CD8-positive, alpha-beta T cell (primary cell): ENCODE measurements at regions of chr3 and their contacts with region 1.

Region 1: GRCh38 chr3:18424729-18425640 is at the start of gene SATB1:
- DNase-seq: peak; percentile 46 to 83 (median 76)
- ATAC-seq: peak; percentile 42
- H3K4me3 ChIP-seq: peak within 1 kb of the TSS; percentile 82 to 84
- H3K4me3 Mint-ChIP-seq: peak within 1 kb of the TSS; percentile 91
- H3K27ac ChIP-seq: peak within 1 kb of the TSS; percentile 76 to 83
- H3K27ac Mint-ChIP-seq: peak within 1 kb of the TSS; percentile 95
- H3K4me1 ChIP-seq: peaks cover 55% of the 10 kb centered on the region
- H3K4me1 Mint-ChIP-seq: peaks cover 76% of the 10 kb centered on the region
- H3K27me3 ChIP-seq: no peaks in the 10 kb centered on the region
- H3K27me3 Mint-ChIP-seq: no peaks in the 10 kb centered on the region
- CTCF ChIP-seq: no peak
- total RNA-seq, gene SATB1: 333 to 346 TPM

Region 2: DNA sequence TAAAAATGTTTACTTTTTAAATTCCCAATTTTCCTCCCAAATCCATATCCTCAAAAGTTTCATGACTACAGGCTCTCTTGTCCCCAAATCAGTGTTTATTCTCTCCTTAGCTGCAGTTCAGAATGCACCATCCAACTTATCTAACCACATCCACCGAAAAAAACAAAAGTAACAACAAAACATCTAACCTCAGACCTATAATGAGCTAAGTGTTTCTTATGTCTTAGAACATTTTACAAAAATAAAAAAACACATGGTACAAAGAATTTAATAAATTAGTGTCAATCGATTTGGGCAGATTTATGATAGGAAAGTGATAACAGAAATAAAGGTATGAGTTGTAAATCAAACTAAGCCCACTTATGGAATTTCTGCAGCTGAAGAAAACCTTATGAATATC is 13.4 kb before region 1 on chr3:
- CTCF ChIA-PET with region 1: interaction called, 4 read pairs
- POLR2A ChIA-PET with region 1: interaction called, 10 read pairs
- intact Hi-C with region 1: loop called in 1 of 2 experiments (anchors 1 kb)
- DNase-seq: peak in 2 of 9 experiments; percentile 34 to 67
- ATAC-seq: peak; percentile 67
- H3K4me3 ChIP-seq: peak overlapping the region in 1 of 2 experiments; percentile 7
- H3K4me3 Mint-ChIP-seq: peak overlapping the region; percentile 72
- H3K27ac ChIP-seq: peak overlapping the region in 1 of 2 experiments; percentile 11
- H3K27ac Mint-ChIP-seq: peak overlapping the region; percentile 92
- H3K4me1 ChIP-seq: peaks cover 86% of the 10 kb centered on the region
- H3K4me1 Mint-ChIP-seq: peaks cover 89% of the 10 kb centered on the region
- H3K27me3 ChIP-seq: no peaks in the 10 kb centered on the region
- H3K27me3 Mint-ChIP-seq: no peaks in the 10 kb centered on the region
- CTCF ChIP-seq: no peak

Region 3: DNA sequence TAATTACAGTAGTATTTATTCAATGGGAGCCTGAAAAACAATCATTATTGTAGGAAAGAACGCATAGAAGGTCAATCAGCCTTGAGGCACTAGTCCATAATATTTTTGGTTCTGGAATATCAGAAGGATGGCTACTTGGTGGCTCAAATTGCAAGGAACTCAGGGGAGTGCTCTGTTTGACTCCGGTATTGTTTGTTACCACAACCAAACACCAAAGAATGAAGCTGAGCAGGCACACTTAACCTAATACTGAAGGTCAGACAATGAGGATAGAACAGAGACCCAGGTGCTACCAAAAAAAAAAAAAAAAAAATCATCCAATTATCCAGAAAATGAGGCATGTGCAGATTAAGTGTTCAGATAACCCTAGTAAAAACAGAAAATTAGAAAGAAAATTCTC is 11.2 kb after region 1 on chr3:
- CTCF ChIA-PET with region 1: interaction called, 4 read pairs
- POLR2A ChIA-PET with region 1: interaction called, 8 read pairs
- intact Hi-C with region 1: loop called in 1 of 2 experiments (anchors 1 kb)
- DNase-seq: no peak
- ATAC-seq: no peak
- H3K4me3 ChIP-seq: peak overlapping the region; percentile 2 to 45
- H3K4me3 Mint-ChIP-seq: peak overlapping the region; percentile 82
- H3K27ac ChIP-seq: peak overlapping the region; percentile 49 to 72
- H3K27ac Mint-ChIP-seq: peak overlapping the region; percentile 91
- H3K4me1 ChIP-seq: peaks cover 65% of the 10 kb centered on the region
- H3K4me1 Mint-ChIP-seq: peaks cover 72% of the 10 kb centered on the region
- H3K27me3 ChIP-seq: no peaks in the 10 kb centered on the region
- H3K27me3 Mint-ChIP-seq: no peaks in the 10 kb centered on the region
- CTCF ChIP-seq: no peak

Region 4: GRCh38 chr3:18891641-18892040 is 466.7 kb after region 1 on chr3:
- CTCF ChIA-PET with region 1: no interaction called
- POLR2A ChIA-PET with region 1: no interaction called
- intact Hi-C with region 1: no loop called
- DNase-seq: peak in 7 of 9 experiments; percentile 0 to 57 (median 10)
- ATAC-seq: peak; percentile 72
- H3K4me3 ChIP-seq: no peak overlapping the region
- H3K4me3 Mint-ChIP-seq: no peak overlapping the region
- H3K27ac ChIP-seq: no peak overlapping the region
- H3K27ac Mint-ChIP-seq: no peak overlapping the region
- H3K4me1 ChIP-seq: peaks cover 7% of the 10 kb centered on the region
- H3K4me1 Mint-ChIP-seq: peaks cover 12% of the 10 kb centered on the region
- H3K27me3 ChIP-seq: peaks cover 0 to 3% of the 10 kb centered on the region in 2 experiments
- H3K27me3 Mint-ChIP-seq: peaks cover 12% of the 10 kb centered on the region
- CTCF ChIP-seq: no peak

Region 5: GRCh38 chr3:19116238-19116637 is 691.3 kb after region 1 on chr3:
- CTCF ChIA-PET with region 1: no interaction called
- POLR2A ChIA-PET with region 1: no interaction called
- intact Hi-C with region 1: no loop called
- DNase-seq: no peak
- ATAC-seq: no peak
- H3K4me3 ChIP-seq: no peak overlapping the region
- H3K4me3 Mint-ChIP-seq: no peak overlapping the region
- H3K27ac ChIP-seq: no peak overlapping the region
- H3K27ac Mint-ChIP-seq: no peak overlapping the region
- H3K4me1 ChIP-seq: no peaks in the 10 kb centered on the region
- H3K4me1 Mint-ChIP-seq: no peaks in the 10 kb centered on the region
- H3K27me3 ChIP-seq: no peaks in the 10 kb centered on the region
- H3K27me3 Mint-ChIP-seq: peaks cover 14% of the 10 kb centered on the region
- CTCF ChIP-seq: no peak

Region 6: GRCh38 chr3:19146685-19147650 is 722.0 kb after region 1 on chr3:
- CTCF ChIA-PET with region 1: no interaction called
- POLR2A ChIA-PET with region 1: no interaction called
- intact Hi-C with region 1: no loop called
- DNase-seq: peak; percentile 33 to 87 (median 68)
- ATAC-seq: peak; percentile 72
- H3K4me3 ChIP-seq: peak overlapping the region; percentile 70 to 75
- H3K4me3 Mint-ChIP-seq: peak overlapping the region; percentile 93
- H3K27ac ChIP-seq: peak overlapping the region; percentile 40 to 47
- H3K27ac Mint-ChIP-seq: peak overlapping the region; percentile 88
- H3K4me1 ChIP-seq: peaks cover 21% of the 10 kb centered on the region
- H3K4me1 Mint-ChIP-seq: peaks cover 14% of the 10 kb centered on the region
- H3K27me3 ChIP-seq: peaks cover 0 to 4% of the 10 kb centered on the region in 2 experiments
- H3K27me3 Mint-ChIP-seq: peaks cover 21% of the 10 kb centered on the region
- CTCF ChIP-seq: peak; percentile 54

Region 7: GRCh38 chr3:19274576-19274975 is 849.6 kb after region 1 on chr3:
- CTCF ChIA-PET with region 1: no interaction called
- POLR2A ChIA-PET with region 1: no interaction called
- intact Hi-C with region 1: no loop called
- DNase-seq: no peak
- ATAC-seq: no peak
- H3K4me3 ChIP-seq: no peak overlapping the region
- H3K4me3 Mint-ChIP-seq: no peak overlapping the region
- H3K27ac ChIP-seq: no peak overlapping the region
- H3K27ac Mint-ChIP-seq: no peak overlapping the region
- H3K4me1 ChIP-seq: no peaks in the 10 kb centered on the region
- H3K4me1 Mint-ChIP-seq: no peaks in the 10 kb centered on the region
- H3K27me3 ChIP-seq: no peaks in the 10 kb centered on the region
- H3K27me3 Mint-ChIP-seq: peaks cover 2% of the 10 kb centered on the region
- CTCF ChIP-seq: no peak